T-cell (primary cell): ENCODE measurements at regions of chr6 and their contacts with region 1.

Region 1: DNA sequence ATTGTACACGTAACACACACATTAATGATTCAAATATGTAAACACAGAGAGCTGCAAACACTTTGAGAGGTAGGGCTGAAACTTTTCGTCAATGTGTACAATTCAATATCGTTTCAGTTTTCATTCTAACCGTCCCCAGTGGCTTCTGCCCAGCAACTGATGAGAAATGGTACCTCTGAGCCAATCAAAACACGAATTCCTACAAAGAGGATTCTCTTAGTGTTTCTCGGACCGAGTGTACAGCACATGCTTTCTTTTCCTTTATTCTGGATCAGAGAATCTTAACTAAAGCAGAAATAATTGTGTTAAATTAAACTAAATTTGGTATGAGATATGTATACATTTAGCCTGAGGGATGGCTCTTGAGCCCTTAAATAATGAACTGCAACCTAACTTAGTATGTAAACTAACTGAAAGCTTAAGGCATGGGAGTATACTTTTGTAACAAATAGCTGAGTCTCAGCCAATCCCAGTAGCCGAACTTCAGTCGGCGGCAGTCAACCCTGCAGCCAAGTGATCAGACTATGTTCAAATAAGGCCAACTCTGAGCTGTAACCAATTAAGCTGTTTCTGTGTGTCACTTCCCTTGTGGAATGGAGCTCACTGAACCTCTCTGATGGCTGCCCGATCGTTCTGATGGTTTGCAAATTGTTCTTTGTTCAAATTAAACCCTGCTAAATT is 16.1 kb downstream of the BTN2A1 start:
- DNase-seq: peak; percentile 50 to 93 (median 81)
- ATAC-seq: peak; percentile 95 to 96 (median 96)
- H3K4me3 ChIP-seq: peak overlapping the region; percentile 44 to 52
- H3K4me3 Mint-ChIP-seq: peak overlapping the region; percentile 88 to 99 (median 97)
- H3K27ac ChIP-seq: peak overlapping the region; percentile 90
- H3K27ac Mint-ChIP-seq: peak overlapping the region; percentile 100
- H3K4me1 ChIP-seq: peaks cover 25 to 43% of the 10 kb centered on the region in 2 experiments
- H3K4me1 Mint-ChIP-seq: peaks cover 63 to 66% (median 65%) of the 10 kb centered on the region in 3 donors
- H3K27me3 ChIP-seq: no peaks in the 10 kb centered on the region
- H3K27me3 Mint-ChIP-seq: no peaks in the 10 kb centered on the region

Region 2: DNA sequence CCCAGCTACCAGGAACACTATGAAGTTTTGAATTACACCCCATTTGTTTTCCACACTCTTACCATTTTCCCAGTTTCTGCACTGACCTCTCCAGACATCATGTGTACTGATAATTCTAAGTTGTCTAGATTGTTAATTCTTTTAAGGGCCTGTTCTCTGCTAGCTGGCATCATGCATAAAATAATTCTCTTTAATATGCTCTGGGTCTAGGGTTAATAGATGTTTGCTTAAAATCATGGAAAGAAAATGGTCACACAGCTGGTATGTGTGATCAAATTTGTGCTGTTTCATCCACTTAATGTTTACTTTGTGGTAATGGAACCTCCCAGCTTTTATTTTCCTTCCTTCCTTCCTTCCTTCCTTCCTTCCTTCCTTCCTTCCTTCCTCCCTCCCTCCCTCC is 337.6 kb before region 1 on chr6:
- CTCF ChIA-PET with region 1: no interaction called
- POLR2A ChIA-PET with region 1: interaction called in 1 of 2 experiments, 10 read pairs
- DNase-seq: no peak
- ATAC-seq: no peak
- H3K4me3 ChIP-seq: no peak overlapping the region
- H3K4me3 Mint-ChIP-seq: no peak overlapping the region
- H3K27ac ChIP-seq: no peak overlapping the region
- H3K27ac Mint-ChIP-seq: peak overlapping the region; percentile 36 to 61
- H3K4me1 ChIP-seq: peaks cover 0 to 16% of the 10 kb centered on the region in 2 experiments
- H3K4me1 Mint-ChIP-seq: peaks cover 33 to 56% (median 41%) of the 10 kb centered on the region in 3 donors
- H3K27me3 ChIP-seq: no peaks in the 10 kb centered on the region
- H3K27me3 Mint-ChIP-seq: no peaks in the 10 kb centered on the region

Region 3: GRCh38 chr6:26335631-26336323 is 138.1 kb before region 1 on chr6:
- CTCF ChIA-PET with region 1: no interaction called
- POLR2A ChIA-PET with region 1: no interaction called
- DNase-seq: no peak
- ATAC-seq: no peak
- H3K4me3 ChIP-seq: no peak overlapping the region
- H3K4me3 Mint-ChIP-seq: peak overlapping the region in 1 of 3 donors; percentile 1
- H3K27ac ChIP-seq: no peak overlapping the region
- H3K27ac Mint-ChIP-seq: peak overlapping the region; percentile 58 to 69
- H3K4me1 ChIP-seq: peaks cover 10 to 13% of the 10 kb centered on the region in 2 experiments
- H3K4me1 Mint-ChIP-seq: peaks cover 32 to 37% (median 33%) of the 10 kb centered on the region in 3 donors
- H3K27me3 ChIP-seq: peaks cover 12 to 19% of the 10 kb centered on the region in 2 experiments
- H3K27me3 Mint-ChIP-seq: peaks cover 6 to 21% of the 10 kb centered on the region in 2 donors

Region 4: GRCh38 chr6:26568601-26569432 is 94.9 kb after region 1 on chr6:
- CTCF ChIA-PET with region 1: interaction called in 1 of 2 experiments, 12 read pairs
- POLR2A ChIA-PET with region 1: no interaction called
- DNase-seq: peak; percentile 89 to 100 (median 98)
- ATAC-seq: peak; percentile 77 to 83 (median 82)
- H3K4me3 ChIP-seq: peak overlapping the region; percentile 51 to 79
- H3K4me3 Mint-ChIP-seq: peak overlapping the region; percentile 92 to 94 (median 93)
- H3K27ac ChIP-seq: peak overlapping the region; percentile 50
- H3K27ac Mint-ChIP-seq: peak overlapping the region; percentile 97 to 98
- H3K4me1 ChIP-seq: peaks cover 5 to 19% of the 10 kb centered on the region in 2 experiments
- H3K4me1 Mint-ChIP-seq: peaks cover 26 to 33% (median 28%) of the 10 kb centered on the region in 3 donors
- H3K27me3 ChIP-seq: no peaks in the 10 kb centered on the region
- H3K27me3 Mint-ChIP-seq: peaks cover 4% of the 10 kb centered on the region in 2 donors